ENCODE measurements at regions of chr1 and their contacts with region 1.

Region 1: DNA sequence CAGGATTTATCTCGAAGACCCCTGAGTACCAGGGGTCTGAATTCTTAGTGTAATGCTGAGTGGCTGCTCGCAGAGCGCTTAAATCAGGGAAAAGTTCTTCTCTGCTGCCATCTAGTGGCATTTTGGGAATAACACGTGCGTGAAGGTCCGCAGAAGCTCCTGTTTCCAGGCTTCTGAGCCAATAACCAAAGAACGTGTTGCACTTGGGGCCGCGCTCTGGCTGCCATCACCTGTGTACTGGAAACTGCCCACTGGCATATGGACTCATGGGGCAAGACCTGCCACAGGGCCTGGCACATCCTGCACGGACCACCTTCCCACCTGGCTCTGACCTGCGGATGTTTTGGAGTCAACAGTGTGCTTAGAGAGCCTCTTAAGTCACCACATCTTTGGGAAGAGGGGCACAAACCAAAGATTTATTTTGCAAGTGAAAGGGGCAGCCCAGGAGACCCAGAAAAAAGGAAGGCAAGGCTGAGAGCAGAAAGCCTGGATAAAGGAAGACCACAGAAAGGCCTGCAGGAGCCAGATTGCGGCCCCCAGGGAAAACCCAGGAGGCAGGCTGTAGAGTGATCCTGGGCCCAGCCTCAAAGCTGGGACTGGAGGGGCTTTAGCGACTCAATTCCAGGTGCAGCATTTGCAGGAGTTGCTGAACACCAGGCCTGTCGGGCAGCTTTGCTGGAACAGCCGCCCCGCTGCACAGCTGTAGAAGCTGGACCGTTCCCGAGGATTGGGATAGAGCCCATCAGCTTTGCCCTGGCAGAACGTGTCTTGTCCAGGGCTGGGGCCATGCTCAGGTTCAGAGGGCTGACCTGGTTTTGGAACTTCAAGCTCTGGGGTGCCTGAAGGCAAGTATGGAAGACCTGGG is 13.0 kb downstream of the CHIT1 start:
- DNase-seq: peak; percentile 83

Region 2: GRCh38 chr1:203117611-203118575 is 98.6 kb before region 1 on chr1:
- CTCF ChIA-PET with region 1: interaction called, 42 read pairs
- POLR2A ChIA-PET with region 1: no interaction called
- DNase-seq: peak; percentile 96

Region 3: DNA sequence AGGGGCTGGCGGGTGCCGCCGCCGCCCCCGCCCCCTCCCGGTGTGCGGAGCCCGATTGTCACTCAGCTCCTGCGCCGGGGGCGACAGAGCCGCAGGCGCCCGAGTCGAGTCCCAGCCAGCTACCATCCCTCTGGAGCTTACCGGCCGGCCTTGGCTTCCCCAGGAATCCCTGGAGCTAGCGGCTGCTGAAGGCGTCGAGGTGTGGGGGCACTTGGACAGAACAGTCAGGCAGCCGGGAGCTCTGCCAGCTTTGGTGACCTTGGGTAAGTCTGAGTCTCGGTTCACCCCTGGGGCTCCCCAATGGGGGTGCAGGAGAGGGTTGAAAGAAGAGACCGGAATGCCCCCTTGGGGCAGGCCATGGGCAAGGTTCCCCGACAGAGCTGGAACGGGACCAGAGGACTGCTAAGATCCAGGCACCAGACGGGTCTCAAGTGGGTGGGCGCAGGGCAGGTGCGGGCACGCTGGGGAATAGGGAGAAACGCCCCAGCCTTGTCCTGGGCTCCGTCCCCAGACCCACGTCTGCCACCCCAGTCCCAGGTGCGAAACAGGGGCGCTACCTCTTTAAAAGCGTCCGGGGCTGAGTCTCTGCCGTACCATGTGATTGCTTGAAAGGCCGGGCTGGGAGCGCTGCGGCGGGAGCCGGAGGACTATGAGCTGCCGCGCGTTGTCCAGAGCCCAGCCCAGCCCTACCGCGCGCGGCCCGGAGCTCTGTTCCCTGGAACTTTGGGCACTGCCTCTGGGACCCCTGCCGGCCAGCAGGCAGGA is 88.7 kb before region 1 on chr1 and contains the start of gene ADORA1:
- CTCF ChIA-PET with region 1: interaction called, 14 read pairs
- POLR2A ChIA-PET with region 1: no interaction called
- DNase-seq: peak; percentile 76

Region 4: GRCh38 chr1:203186446-203187303 is 29.8 kb before region 1 on chr1 and contains the start of gene CHI3L1:
- CTCF ChIA-PET with region 1: no interaction called
- POLR2A ChIA-PET with region 1: no interaction called
- DNase-seq: no peak

Region 5: DNA sequence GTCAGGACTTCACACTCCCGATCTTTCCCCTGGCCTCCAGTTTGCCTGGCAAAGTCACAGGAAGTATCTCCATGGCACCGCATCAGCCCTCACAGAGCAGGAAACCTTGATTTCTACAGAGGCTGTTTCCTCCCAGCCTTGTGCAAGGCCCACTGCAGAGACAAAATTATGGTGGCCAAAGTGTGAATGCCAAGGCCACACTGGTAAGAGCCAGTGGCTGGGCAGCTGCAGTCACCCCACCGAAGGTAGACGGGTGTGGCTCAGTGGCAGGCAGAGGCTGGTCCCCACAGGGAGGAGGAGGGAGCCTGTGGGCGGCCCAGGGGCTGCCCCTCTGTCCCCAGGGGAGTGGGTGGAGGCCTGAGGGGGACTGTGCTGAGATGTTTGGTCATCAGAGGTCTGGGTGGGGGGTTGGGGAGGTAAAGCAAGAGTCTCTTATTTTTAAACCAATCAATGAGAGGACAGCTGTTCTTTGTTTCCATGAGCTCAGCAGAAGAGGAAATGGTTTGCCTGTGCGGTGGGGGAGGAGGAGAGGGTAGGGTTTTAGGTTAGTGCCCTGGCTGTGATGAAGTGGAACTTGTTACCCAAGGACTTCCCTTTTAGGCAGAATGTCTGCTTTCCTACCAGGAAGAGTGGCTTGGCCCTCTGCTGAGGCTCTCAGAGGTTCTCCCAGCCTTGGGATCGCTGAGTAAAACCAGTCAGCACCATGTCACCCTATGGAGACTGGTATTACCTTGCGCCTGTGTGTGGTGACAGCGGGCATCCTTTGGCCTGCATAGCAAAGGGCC is 70.8 kb after region 1 on chr1:
- CTCF ChIA-PET with region 1: no interaction called
- POLR2A ChIA-PET with region 1: no interaction called
- DNase-seq: no peak

Measured in HEK293T (cell line).